CD4-positive, alpha-beta T cell (primary cell): ENCODE measurements at regions of chr11 and their contacts with region 1.

Region 1: DNA sequence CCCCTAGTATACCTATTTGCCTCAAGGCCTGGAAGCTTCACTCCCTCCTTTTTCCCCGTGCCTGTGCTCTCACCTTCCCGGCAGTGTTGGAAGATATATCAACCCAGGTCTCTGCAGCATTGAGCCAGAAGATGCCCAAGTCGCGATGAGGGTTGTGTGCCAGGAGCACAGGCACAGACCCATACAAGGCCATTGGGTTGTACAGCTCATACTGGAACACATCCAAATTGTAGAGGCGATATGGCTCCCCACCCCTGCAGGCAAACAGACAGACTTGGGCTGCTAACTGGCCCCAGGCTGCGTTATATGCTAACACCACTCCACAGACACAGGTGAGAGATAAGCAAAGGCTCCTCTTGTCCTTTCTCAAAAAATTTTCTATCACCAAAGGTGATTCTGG is 10.7 kb upstream of the B3GAT3 start:
- DNase-seq: no peak
- ATAC-seq: no peak
- H3K4me3 ChIP-seq: no peak overlapping the region
- H3K4me3 Mint-ChIP-seq: no peak overlapping the region
- H3K27ac ChIP-seq: no peak overlapping the region
- H3K27ac Mint-ChIP-seq: peak overlapping the region; percentile 30
- H3K4me1 ChIP-seq: peaks cover 27% of the 10 kb centered on the region
- H3K4me1 Mint-ChIP-seq: peaks cover 19% of the 10 kb centered on the region
- H3K27me3 ChIP-seq: no peaks in the 10 kb centered on the region
- H3K27me3 Mint-ChIP-seq: no peaks in the 10 kb centered on the region
- CTCF ChIP-seq: no peak

Region 2: GRCh38 chr11:62427630-62428233 is 204.8 kb before region 1 on chr11:
- CTCF ChIA-PET with region 1: no interaction called
- POLR2A ChIA-PET with region 1: no interaction called
- intact Hi-C with region 1: no loop called
- DNase-seq: peak in 3 of 14 experiments; percentile 22 to 56 (median 48)
- ATAC-seq: no peak
- H3K4me3 ChIP-seq: no peak overlapping the region
- H3K4me3 Mint-ChIP-seq: peak overlapping the region; percentile 38
- H3K27ac ChIP-seq: peak overlapping the region in 1 of 2 donors; percentile 24
- H3K27ac Mint-ChIP-seq: peak overlapping the region; percentile 35
- H3K4me1 ChIP-seq: peaks cover 34% of the 10 kb centered on the region
- H3K4me1 Mint-ChIP-seq: peaks cover 33% of the 10 kb centered on the region
- H3K27me3 ChIP-seq: no peaks in the 10 kb centered on the region
- H3K27me3 Mint-ChIP-seq: no peaks in the 10 kb centered on the region
- CTCF ChIP-seq: no peak

Region 3: GRCh38 chr11:62621567-62622470 is 10.7 kb before region 1 on chr11 and contains the start of gene B3GAT3:
- CTCF ChIA-PET with region 1: no interaction called
- POLR2A ChIA-PET with region 1: interaction called, 24 read pairs
- intact Hi-C with region 1: no loop called
- DNase-seq: peak; percentile 91 to 99 (median 95)
- ATAC-seq: peak; percentile 82
- H3K4me3 ChIP-seq: peak within 1 kb of the TSS; percentile 69
- H3K4me3 Mint-ChIP-seq: peak within 1 kb of the TSS; percentile 95
- H3K27ac ChIP-seq: peak within 1 kb of the TSS; percentile 86 to 88
- H3K27ac Mint-ChIP-seq: peak within 1 kb of the TSS; percentile 89
- H3K4me1 ChIP-seq: peaks cover 32% of the 10 kb centered on the region
- H3K4me1 Mint-ChIP-seq: peaks cover 27% of the 10 kb centered on the region
- H3K27me3 ChIP-seq: no peaks in the 10 kb centered on the region
- H3K27me3 Mint-ChIP-seq: no peaks in the 10 kb centered on the region
- CTCF ChIP-seq: no peak
- total RNA-seq, gene B3GAT3: 47.2 to 49.5 TPM